ENCODE measurements at regions of chr12 and their contacts with region 1.

Region 1: GRCh38 chr12:21677622-21678277 is 20.1 kb upstream of the LDHB start:
- DNase-seq: no peak
- H3K4me3 ChIP-seq: no peak overlapping the region
- CTCF ChIP-seq: no peak

Region 2: DNA sequence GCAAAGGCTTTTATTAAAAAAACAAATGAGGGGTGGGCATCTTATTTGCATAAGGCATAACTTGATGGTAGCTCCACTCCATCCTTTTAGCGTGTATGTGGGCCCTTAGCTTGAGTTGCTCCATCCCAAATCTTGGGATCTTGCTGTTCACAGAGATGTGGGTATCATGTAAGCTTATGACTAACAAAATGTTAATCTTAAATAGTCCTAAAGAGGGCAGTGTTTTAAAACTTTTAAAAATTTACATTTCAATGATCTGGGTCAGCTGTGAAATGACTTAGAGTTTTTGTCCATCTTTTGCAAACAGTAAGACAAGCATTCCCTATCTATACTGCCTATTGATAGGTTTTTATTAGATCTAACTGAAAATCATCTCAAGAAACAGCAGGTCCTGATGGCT is 429.1 kb before region 1 on chr12:
- CTCF ChIA-PET with region 1: interaction called, 12 read pairs
- POLR2A ChIA-PET with region 1: no interaction called
- DNase-seq: no peak
- H3K4me3 ChIP-seq: no peak overlapping the region
- CTCF ChIP-seq: no peak

Region 3: GRCh38 chr12:21501379-21501956 is 176.3 kb before region 1 on chr12 and contains the starts of genes GOLT1B and RECQL:
- CTCF ChIA-PET with region 1: interaction called, 11 read pairs
- POLR2A ChIA-PET with region 1: no interaction called
- DNase-seq: peak; percentile 94
- H3K4me3 ChIP-seq: peak within 1 kb of the TSS; percentile 92
- CTCF ChIP-seq: no peak

Region 4: DNA sequence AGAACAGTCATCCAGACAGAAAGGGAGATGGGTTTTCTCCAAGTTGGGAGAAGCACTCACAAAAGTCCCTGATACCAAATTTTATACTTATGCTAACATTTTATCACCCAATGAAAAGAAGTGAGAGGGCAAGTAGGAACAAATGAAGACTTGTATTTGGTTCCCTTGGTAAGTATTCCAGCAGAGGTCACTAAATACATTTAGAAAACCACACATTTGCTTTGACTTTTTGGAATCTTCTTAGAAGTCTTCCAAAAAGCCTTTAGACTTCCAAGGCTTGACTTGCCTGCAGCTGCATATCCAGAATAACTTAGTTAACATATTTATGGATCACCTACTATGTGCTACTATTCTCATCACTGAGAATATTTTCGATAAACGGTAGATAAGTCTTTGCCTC is 70.0 kb before region 1 on chr12:
- CTCF ChIA-PET with region 1: interaction called, 15 read pairs
- POLR2A ChIA-PET with region 1: no interaction called
- DNase-seq: no peak
- H3K4me3 ChIP-seq: no peak overlapping the region
- CTCF ChIP-seq: no peak

Region 5: GRCh38 chr12:21613931-21614330 is 63.8 kb before region 1 on chr12:
- CTCF ChIA-PET with region 1: interaction called, 15 read pairs
- POLR2A ChIA-PET with region 1: no interaction called
- DNase-seq: no peak
- H3K4me3 ChIP-seq: no peak overlapping the region
- CTCF ChIP-seq: no peak

Region 6: GRCh38 chr12:21657326-21658077 is 20.2 kb before region 1 on chr12 and contains the start of gene LDHB:
- CTCF ChIA-PET with region 1: interaction called, 10 read pairs
- POLR2A ChIA-PET with region 1: interaction called, 6 read pairs
- DNase-seq: peak; percentile 71
- H3K4me3 ChIP-seq: peak within 1 kb of the TSS; percentile 84
- CTCF ChIP-seq: no peak

Measured in AG04449 (cell line).